Common myeloid progenitor, CD34-positive (primary cell): ENCODE measurements at regions of chr7 and their contacts with region 1.

Region 1: GRCh38 chr7:71752171-71752935 is 620.4 kb downstream of the GALNT17 start:
- DNase-seq: peak; percentile 48 to 75 (median 71)
- H3K4me3 ChIP-seq: peak overlapping the region in 5 of 7 experiments; percentile 8 to 69 (median 36)
- H3K27ac ChIP-seq: no peak overlapping the region
- H3K4me1 ChIP-seq: peaks cover 0 to 13% (median 9%) of the 10 kb centered on the region in 4 experiments
- H3K27me3 ChIP-seq: no peaks in the 10 kb centered on the region

Region 2: GRCh38 chr7:71497256-71497946 is 255.0 kb before region 1 on chr7:
- CTCF ChIA-PET with region 1: no interaction called
- POLR2A ChIA-PET with region 1: no interaction called
- DNase-seq: no peak
- H3K4me3 ChIP-seq: no peak overlapping the region
- H3K27ac ChIP-seq: no peak overlapping the region
- H3K4me1 ChIP-seq: no peaks in the 10 kb centered on the region
- H3K27me3 ChIP-seq: no peaks in the 10 kb centered on the region

Region 3: GRCh38 chr7:71896535-71896934 is 144.2 kb after region 1 on chr7:
- CTCF ChIA-PET with region 1: no interaction called
- POLR2A ChIA-PET with region 1: no interaction called
- DNase-seq: peak in 1 of 3 donors; percentile 29
- H3K4me3 ChIP-seq: peak overlapping the region in 1 of 7 experiments; percentile 1
- H3K27ac ChIP-seq: peak overlapping the region; percentile 36 to 67
- H3K4me1 ChIP-seq: peaks cover 4 to 57% (median 38%) of the 10 kb centered on the region in 4 experiments
- H3K27me3 ChIP-seq: no peaks in the 10 kb centered on the region

Region 4: DNA sequence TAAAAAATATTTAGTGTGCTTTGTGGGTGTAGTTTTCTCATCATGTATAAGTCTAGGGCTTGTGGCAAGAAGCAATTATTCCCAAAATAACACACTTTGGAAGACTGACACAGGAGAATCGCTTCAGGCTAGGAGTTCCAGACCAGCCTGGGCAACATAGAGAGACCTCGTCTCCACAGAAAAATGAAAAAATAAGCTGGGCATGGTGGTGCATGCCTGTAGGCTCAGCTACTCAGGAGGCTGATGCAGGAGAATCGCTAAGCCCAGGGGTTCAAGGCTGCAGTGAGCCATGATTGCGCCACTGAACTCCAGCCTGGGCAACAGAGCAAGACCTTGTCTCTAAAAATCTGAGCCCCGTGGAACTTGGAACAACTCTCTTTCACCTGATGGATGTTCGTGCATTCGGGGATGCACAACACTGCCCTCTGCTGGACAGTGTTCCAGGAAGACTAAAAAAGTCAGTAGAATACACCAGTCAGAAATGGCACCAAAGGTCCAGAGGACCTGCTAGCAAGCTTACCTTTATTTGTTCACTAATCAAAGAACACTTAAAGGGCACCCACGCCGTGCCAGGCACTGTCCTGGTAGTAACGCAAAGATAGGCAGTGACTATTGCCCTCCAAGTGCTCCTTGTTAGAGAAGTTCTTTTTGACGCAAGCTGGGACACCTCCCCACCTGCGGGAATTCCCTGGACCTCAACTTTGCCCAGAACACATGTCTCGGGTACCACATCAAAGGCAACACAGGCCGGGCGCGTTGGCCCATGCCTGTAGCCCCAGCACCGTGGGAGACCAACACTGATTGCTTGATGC is 741.7 kb after region 1 on chr7:
- CTCF ChIA-PET with region 1: interaction called, 66 read pairs
- POLR2A ChIA-PET with region 1: no interaction called
- DNase-seq: peak; percentile 71 to 88 (median 80)
- H3K4me3 ChIP-seq: no peak overlapping the region
- H3K27ac ChIP-seq: no peak overlapping the region
- H3K4me1 ChIP-seq: peaks cover 0 to 2% (median 0%) of the 10 kb centered on the region in 4 experiments
- H3K27me3 ChIP-seq: no peaks in the 10 kb centered on the region